ENCODE measurements at regions of chr6 and their contacts with region 1.

Region 1: GRCh38 chr6:118724211-118724610 is 72.8 kb upstream of the CEP85L start:
- DNase-seq: no peak
- H3K4me3 Mint-ChIP-seq: no peak overlapping the region
- H3K27ac Mint-ChIP-seq: peak overlapping the region; percentile 24
- H3K4me1 Mint-ChIP-seq: peaks cover 55% of the 10 kb centered on the region
- H3K27me3 Mint-ChIP-seq: no peaks in the 10 kb centered on the region

Region 2: GRCh38 chr6:118565311-118565960 is 158.8 kb before region 1 on chr6:
- CTCF ChIA-PET with region 1: no interaction called
- POLR2A ChIA-PET with region 1: no interaction called
- intact Hi-C with region 1: loop called (anchors 5 kb)
- DNase-seq: no peak
- H3K4me3 Mint-ChIP-seq: no peak overlapping the region
- H3K27ac Mint-ChIP-seq: peak overlapping the region; percentile 11
- H3K4me1 Mint-ChIP-seq: peaks cover 17% of the 10 kb centered on the region
- H3K27me3 Mint-ChIP-seq: no peaks in the 10 kb centered on the region

Region 3: DNA sequence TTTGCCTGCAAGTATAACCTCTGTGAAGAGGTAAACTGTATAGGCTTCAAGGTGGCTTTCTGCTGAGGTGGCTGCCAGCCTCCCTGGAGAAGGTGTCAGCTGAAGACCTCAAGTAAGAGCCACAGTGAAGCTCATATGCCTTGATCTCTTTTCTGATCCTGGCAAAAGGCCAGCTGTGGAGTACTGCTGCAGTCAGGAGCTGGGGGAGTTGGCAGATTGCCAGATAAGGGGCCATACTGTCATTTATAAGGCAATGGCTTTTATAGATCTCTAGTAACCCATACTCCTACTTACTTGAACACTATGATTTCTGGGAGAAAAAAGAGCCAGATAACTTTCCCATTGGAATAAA is 64.0 kb before region 1 on chr6:
- CTCF ChIA-PET with region 1: interaction called, 3 read pairs
- POLR2A ChIA-PET with region 1: interaction called, 4 read pairs
- intact Hi-C with region 1: loop called (anchors 1 kb)
- DNase-seq: peak; percentile 54
- H3K4me3 Mint-ChIP-seq: peak overlapping the region; percentile 33
- H3K27ac Mint-ChIP-seq: peak overlapping the region; percentile 82
- H3K4me1 Mint-ChIP-seq: peaks cover 68% of the 10 kb centered on the region
- H3K27me3 Mint-ChIP-seq: no peaks in the 10 kb centered on the region

Region 4: DNA sequence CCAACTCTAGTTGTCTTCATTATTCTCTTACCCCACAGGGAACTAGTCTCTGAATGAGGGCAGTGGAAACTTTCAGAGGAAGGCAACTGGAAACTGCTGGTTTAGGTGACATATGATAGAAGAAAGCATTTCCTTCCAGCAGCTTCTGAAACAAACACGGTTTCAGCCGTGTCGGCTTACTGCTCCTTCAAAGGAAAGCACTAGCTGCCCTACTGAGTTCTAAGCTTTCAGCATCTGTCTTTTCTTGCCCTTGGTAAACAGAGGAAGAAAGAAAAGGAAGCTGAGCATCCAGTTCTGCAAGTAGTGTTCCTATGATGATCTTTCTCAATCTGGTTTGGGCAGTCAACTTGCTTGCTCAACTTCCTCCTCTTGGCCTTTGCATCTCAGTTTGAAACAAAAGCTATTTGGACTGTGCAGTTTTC is 44.7 kb after region 1 on chr6:
- CTCF ChIA-PET with region 1: no interaction called
- POLR2A ChIA-PET with region 1: no interaction called
- intact Hi-C with region 1: loop called (anchors 1 kb)
- DNase-seq: peak; percentile 49
- H3K4me3 Mint-ChIP-seq: no peak overlapping the region
- H3K27ac Mint-ChIP-seq: peak overlapping the region; percentile 73
- H3K4me1 Mint-ChIP-seq: peaks cover 19% of the 10 kb centered on the region
- H3K27me3 Mint-ChIP-seq: no peaks in the 10 kb centered on the region

Region 5: DNA sequence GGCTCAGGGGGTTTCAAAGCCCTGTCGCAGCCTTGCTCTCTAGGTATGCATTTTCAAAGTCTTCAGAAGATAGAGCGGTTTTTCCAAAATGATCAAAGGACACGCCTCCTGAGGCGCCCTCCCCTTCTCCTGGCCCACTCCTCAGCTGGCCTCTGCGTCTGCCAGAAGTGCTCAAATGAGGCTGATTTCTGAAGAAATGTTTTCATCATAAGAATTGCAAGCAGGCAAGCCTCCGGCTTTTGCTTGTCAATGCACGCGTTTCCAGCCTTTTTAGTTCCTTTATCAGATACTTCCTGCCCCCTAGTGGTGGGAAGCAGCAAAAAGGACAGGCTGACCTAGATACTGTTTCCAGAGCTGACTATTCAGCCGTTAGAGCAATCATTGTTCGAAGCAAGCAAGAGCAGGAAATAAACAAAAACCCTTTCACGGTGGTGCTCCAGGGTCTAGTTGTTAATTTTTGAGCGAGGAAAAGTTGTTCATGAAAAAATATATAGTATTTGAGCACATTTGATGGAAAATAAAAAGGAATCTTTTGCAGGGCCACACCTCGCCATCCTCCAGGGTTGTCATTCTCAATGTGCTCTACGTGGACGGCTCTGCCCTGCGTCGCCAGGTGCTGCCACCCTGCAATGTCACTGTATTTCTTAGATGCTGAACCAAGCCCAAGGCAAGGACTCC is 76.3 kb after region 1 on chr6:
- CTCF ChIA-PET with region 1: interaction called, 5 read pairs
- POLR2A ChIA-PET with region 1: no interaction called
- intact Hi-C with region 1: loop called (anchors 1 kb)
- DNase-seq: peak; percentile 89
- H3K4me3 Mint-ChIP-seq: peak overlapping the region; percentile 28
- H3K27ac Mint-ChIP-seq: peak overlapping the region; percentile 16
- H3K4me1 Mint-ChIP-seq: peaks cover 28% of the 10 kb centered on the region
- H3K27me3 Mint-ChIP-seq: no peaks in the 10 kb centered on the region

Region 6: GRCh38 chr6:118934461-118935330 is 210.5 kb after region 1 on chr6 and contains the start of gene MCM9:
- CTCF ChIA-PET with region 1: no interaction called
- POLR2A ChIA-PET with region 1: no interaction called
- intact Hi-C with region 1: no loop called
- DNase-seq: peak; percentile 94
- H3K4me3 Mint-ChIP-seq: peak within 1 kb of the TSS; percentile 81
- H3K27ac Mint-ChIP-seq: peak within 1 kb of the TSS; percentile 92
- H3K4me1 Mint-ChIP-seq: peaks cover 23% of the 10 kb centered on the region
- H3K27me3 Mint-ChIP-seq: no peaks in the 10 kb centered on the region
- total RNA-seq, gene MCM9: 14.4 to 14.7 TPM